ENCODE measurements at regions of chr6 and their contacts with region 1.

Region 1: GRCh38 chr6:22940571-22941211 is 371.3 kb downstream of the HDGFL1 start:
- DNase-seq: peak; percentile 54 to 72
- H3K4me3 ChIP-seq: no peak overlapping the region
- H3K4me3 Mint-ChIP-seq: peak overlapping the region; percentile 12
- H3K27ac Mint-ChIP-seq: peak overlapping the region; percentile 67
- H3K4me1 ChIP-seq: peaks cover 28% of the 10 kb centered on the region
- H3K4me1 Mint-ChIP-seq: peaks cover 34% of the 10 kb centered on the region
- H3K27me3 ChIP-seq: no peaks in the 10 kb centered on the region
- H3K27me3 Mint-ChIP-seq: no peaks in the 10 kb centered on the region
- CTCF ChIP-seq: no peak

Region 2: GRCh38 chr6:22747571-22747970 is 193.1 kb before region 1 on chr6:
- CTCF ChIA-PET with region 1: no interaction called
- POLR2A ChIA-PET with region 1: no interaction called
- intact Hi-C with region 1: loop called (anchors 2 kb)
- DNase-seq: no peak
- H3K4me3 ChIP-seq: no peak overlapping the region
- H3K4me3 Mint-ChIP-seq: no peak overlapping the region
- H3K27ac Mint-ChIP-seq: no peak overlapping the region
- H3K4me1 ChIP-seq: peaks cover 15% of the 10 kb centered on the region
- H3K4me1 Mint-ChIP-seq: peaks cover 18% of the 10 kb centered on the region
- H3K27me3 ChIP-seq: no peaks in the 10 kb centered on the region
- H3K27me3 Mint-ChIP-seq: no peaks in the 10 kb centered on the region
- CTCF ChIP-seq: no peak

Region 3: GRCh38 chr6:22789315-22789714 is 151.4 kb before region 1 on chr6:
- CTCF ChIA-PET with region 1: no interaction called
- POLR2A ChIA-PET with region 1: no interaction called
- intact Hi-C with region 1: no loop called
- DNase-seq: no peak
- H3K4me3 ChIP-seq: no peak overlapping the region
- H3K4me3 Mint-ChIP-seq: no peak overlapping the region
- H3K27ac Mint-ChIP-seq: no peak overlapping the region
- H3K4me1 ChIP-seq: no peaks in the 10 kb centered on the region
- H3K4me1 Mint-ChIP-seq: no peaks in the 10 kb centered on the region
- H3K27me3 ChIP-seq: no peaks in the 10 kb centered on the region
- H3K27me3 Mint-ChIP-seq: no peaks in the 10 kb centered on the region
- CTCF ChIP-seq: no peak

Region 4: GRCh38 chr6:22880686-22881433 is 59.8 kb before region 1 on chr6:
- CTCF ChIA-PET with region 1: no interaction called
- POLR2A ChIA-PET with region 1: no interaction called
- intact Hi-C with region 1: loop called (anchors 1 kb)
- DNase-seq: peak; percentile 49 to 68
- H3K4me3 ChIP-seq: no peak overlapping the region
- H3K4me3 Mint-ChIP-seq: peak overlapping the region; percentile 67
- H3K27ac Mint-ChIP-seq: peak overlapping the region; percentile 77
- H3K4me1 ChIP-seq: peaks cover 59% of the 10 kb centered on the region
- H3K4me1 Mint-ChIP-seq: peaks cover 46% of the 10 kb centered on the region
- H3K27me3 ChIP-seq: no peaks in the 10 kb centered on the region
- H3K27me3 Mint-ChIP-seq: no peaks in the 10 kb centered on the region
- CTCF ChIP-seq: no peak

Region 5: DNA sequence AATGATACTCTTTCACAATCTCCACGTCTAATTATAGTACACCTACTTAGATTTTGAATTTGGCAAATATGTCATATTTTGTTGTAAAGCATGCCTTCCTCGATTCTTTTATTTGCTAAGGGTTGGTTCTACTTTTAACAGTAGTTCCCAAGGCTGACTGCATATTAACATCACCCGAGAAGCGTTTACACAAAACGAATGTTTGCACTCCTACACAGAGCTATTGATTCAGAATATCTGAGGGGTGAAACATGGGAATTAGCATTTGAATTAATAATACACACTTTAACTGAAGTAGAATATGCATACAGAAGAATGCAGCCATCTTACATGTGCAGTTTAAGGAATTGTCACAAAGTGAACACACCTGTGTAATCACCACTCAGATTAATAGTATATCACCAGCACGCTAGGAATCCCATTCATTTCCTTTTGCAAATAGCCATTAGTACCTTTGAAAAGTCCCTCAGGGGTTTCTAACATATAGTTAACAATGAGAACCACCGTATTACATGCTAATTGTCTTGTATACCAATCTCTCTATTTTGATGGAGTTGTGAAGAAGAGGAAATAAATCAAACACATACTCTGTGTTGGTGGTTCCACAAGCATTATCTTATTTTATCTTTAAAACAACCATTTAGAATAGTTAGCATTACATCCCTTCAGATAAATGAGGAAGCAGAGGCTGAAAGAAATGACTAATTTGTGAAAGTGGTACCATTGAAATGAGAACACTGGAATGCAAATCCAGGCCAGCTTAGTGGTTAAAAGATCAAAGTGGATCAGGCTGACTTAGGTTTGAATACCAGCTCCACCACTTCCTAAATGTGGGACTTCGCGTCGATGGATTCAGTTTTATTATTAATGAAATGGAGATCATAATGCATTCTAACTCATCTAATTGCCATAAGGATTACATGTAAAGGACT is 53.8 kb before region 1 on chr6:
- CTCF ChIA-PET with region 1: no interaction called
- POLR2A ChIA-PET with region 1: no interaction called
- intact Hi-C with region 1: loop called (anchors 1 kb)
- DNase-seq: peak in 1 of 2 experiments; percentile 43
- H3K4me3 ChIP-seq: no peak overlapping the region
- H3K4me3 Mint-ChIP-seq: peak overlapping the region; percentile 47
- H3K27ac Mint-ChIP-seq: peak overlapping the region; percentile 55
- H3K4me1 ChIP-seq: peaks cover 66% of the 10 kb centered on the region
- H3K4me1 Mint-ChIP-seq: peaks cover 30% of the 10 kb centered on the region
- H3K27me3 ChIP-seq: no peaks in the 10 kb centered on the region
- H3K27me3 Mint-ChIP-seq: no peaks in the 10 kb centered on the region
- CTCF ChIP-seq: no peak

Region 6: DNA sequence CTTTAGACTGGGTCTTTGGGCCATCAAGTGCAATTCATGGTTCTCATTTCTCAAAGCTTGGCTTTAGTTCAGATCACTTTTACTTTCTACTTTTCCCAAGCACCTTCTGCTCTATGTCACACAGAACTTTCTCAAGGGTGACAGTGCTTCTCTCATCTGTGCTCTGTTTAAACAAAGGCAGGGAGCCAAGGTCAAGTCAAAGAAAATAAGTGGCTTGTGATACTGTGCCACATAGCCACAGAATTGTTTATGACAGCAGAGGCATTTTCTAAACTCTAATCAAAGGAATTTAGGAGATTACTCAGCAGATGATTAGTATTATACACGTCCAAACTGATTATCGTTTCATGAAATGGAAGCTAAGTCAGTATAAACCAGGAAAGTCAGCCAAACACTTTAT is 23.3 kb before region 1 on chr6:
- CTCF ChIA-PET with region 1: no interaction called
- POLR2A ChIA-PET with region 1: interaction called, 6 read pairs
- intact Hi-C with region 1: loop called (anchors 1 kb)
- DNase-seq: no peak
- H3K4me3 ChIP-seq: peak overlapping the region; percentile 28
- H3K4me3 Mint-ChIP-seq: peak overlapping the region; percentile 84
- H3K27ac Mint-ChIP-seq: peak overlapping the region; percentile 34
- H3K4me1 ChIP-seq: peaks cover 10% of the 10 kb centered on the region
- H3K4me1 Mint-ChIP-seq: peaks cover 21% of the 10 kb centered on the region
- H3K27me3 ChIP-seq: no peaks in the 10 kb centered on the region
- H3K27me3 Mint-ChIP-seq: no peaks in the 10 kb centered on the region
- CTCF ChIP-seq: no peak

Region 7: DNA sequence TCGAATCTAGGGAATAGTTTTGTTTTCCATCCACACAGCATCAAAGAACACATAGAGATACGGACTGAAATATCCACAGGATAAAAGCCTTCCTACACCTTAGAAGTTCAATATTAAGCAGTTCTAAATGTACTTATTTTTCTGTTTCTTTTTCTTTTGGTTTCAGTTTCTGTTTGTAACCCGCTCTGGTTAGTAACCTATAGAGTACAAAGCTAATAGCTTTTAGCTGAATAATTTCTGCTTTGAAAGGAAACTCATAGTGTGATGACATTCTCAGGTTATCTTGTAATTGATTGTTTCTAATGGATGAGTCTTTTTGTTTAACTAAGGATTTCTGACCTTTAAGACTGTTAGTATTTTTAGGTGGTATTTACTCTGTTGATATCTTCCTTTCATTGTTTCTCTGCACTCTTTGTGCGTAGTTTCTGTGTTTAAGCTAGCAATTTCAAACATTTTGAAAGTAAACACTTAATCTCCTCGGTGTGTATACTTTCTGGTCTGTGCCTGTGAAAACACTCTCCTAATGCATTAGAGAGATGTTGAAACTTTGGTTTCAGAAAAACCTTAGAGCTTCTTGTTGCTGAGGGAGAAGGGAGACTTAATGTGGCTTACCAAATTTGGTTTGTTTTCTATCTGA is 14.2 kb after region 1 on chr6:
- CTCF ChIA-PET with region 1: interaction called, 3 read pairs
- POLR2A ChIA-PET with region 1: no interaction called
- intact Hi-C with region 1: loop called (anchors 1 kb)
- DNase-seq: peak in 1 of 2 experiments; percentile 51
- H3K4me3 ChIP-seq: 0 out of 2 replicates have a peak overlapping the region, but pooled peaks have one; percentile 13
- H3K4me3 Mint-ChIP-seq: peak overlapping the region; percentile 70
- H3K27ac Mint-ChIP-seq: peak overlapping the region; percentile 93
- H3K4me1 ChIP-seq: peaks cover 48% of the 10 kb centered on the region
- H3K4me1 Mint-ChIP-seq: peaks cover 34% of the 10 kb centered on the region
- H3K27me3 ChIP-seq: no peaks in the 10 kb centered on the region
- H3K27me3 Mint-ChIP-seq: no peaks in the 10 kb centered on the region
- CTCF ChIP-seq: no peak

Measured in Caco-2 (cell line).